Naive thymus-derived CD8-positive, alpha-beta T cell (primary cell): ENCODE measurements at regions of chr14 and their contacts with region 1.

Region 1: DNA sequence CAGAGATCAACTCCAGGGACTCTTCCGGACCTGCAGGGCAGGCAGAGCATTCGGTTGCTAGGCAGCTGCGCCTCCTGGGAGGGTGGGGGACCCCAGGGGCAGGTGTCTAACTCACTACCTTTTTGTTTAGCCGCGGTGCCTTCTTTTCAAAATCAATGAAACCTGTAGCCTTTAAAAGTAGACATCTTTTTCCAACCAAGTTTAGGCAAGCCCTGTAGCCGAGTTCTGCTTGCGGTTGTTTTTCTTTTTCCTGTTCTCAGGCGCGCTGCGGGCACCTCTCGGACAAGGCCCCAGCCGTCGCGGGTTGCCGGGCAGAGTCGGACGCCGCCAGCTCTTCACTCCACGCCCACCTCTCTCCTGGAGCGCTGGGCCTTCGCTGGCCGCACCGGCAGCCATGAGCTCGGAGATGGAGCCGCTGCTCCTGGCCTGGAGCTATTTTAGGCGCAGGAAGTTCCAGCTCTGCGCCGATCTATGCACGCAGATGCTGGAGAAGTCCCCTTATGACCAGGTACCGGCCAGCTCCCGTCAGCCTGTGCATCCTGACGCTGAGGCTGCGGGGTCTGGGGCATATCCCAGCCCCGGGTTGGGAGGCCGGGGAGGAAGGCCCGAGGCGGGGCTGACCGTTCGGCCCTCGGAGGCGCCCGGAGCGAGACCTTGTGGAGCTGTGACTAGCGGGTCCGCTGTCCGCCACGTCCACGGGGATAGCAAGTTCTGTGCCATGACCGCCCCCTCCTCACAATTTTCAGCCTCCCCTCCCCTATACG is at the start of gene TTC8:
- DNase-seq: peak; percentile 71 to 95 (median 86)
- ATAC-seq: peak; percentile 95 to 96
- H3K4me3 Mint-ChIP-seq: peak within 1 kb of the TSS; percentile 74 to 95 (median 88)
- H3K27ac Mint-ChIP-seq: peak within 1 kb of the TSS; percentile 96 to 100 (median 99)
- H3K4me1 Mint-ChIP-seq: peaks cover 6 to 15% (median 12%) of the 10 kb centered on the region in 4 donors
- H3K27me3 Mint-ChIP-seq: peaks cover 0 to 13% (median 6%) of the 10 kb centered on the region in 5 donors
- polyA plus RNA-seq, gene TTC8: 1.2 to 1.8 (median 1.5) TPM

Region 2: GRCh38 chr14:88792572-88793258 is 31.8 kb before region 1 on chr14 and contains the start of gene EML5:
- POLR2A ChIA-PET with region 1: interaction called, 21 read pairs
- DNase-seq: peak; percentile 74 to 89 (median 85)
- ATAC-seq: peak; percentile 80 to 84
- H3K4me3 Mint-ChIP-seq: peak within 1 kb of the TSS; percentile 82 to 93 (median 90)
- H3K27ac Mint-ChIP-seq: peak within 1 kb of the TSS; percentile 38 to 94 (median 91)
- H3K4me1 Mint-ChIP-seq: peaks cover 5 to 29% (median 22%) of the 10 kb centered on the region in 4 donors
- H3K27me3 Mint-ChIP-seq: peaks cover 0 to 13% (median 0%) of the 10 kb centered on the region in 5 donors
- polyA plus RNA-seq, gene EML5: 0.23 to 1.1 (median 0.76) TPM

Region 3: DNA sequence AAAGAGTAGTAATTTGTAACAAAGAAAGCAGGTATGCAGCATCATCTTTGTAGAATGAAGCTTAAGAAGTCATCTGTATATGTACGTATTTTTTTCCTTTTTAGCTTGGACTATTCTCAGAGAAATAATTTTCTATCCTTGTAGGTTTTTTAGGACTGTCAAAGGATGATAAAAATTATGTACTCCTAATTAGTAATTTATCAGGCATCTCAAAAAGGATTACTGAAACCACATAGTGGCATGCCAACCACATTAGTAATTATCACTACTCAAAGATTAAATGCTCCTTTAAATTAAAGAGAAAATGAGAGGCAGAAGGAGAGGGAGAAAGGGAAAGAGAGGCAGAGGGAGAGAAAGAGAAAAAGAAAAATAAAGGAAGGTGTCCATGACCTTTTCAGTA is 17.2 kb after region 1 on chr14:
- POLR2A ChIA-PET with region 1: no interaction called
- DNase-seq: no peak
- ATAC-seq: no peak
- H3K4me3 Mint-ChIP-seq: no peak overlapping the region
- H3K27ac Mint-ChIP-seq: no peak overlapping the region
- H3K4me1 Mint-ChIP-seq: no peaks in the 10 kb centered on the region
- H3K27me3 Mint-ChIP-seq: peaks cover 2 to 10% (median 6%) of the 10 kb centered on the region in 5 donors